ENCODE measurements at regions of chr15 and their contacts with region 1.

Region 1: GRCh38 chr15:70875001-70875782 is 17.0 kb downstream of the THAP10 start:
- DNase-seq: peak; percentile 49
- H3K4me3 ChIP-seq: no peak overlapping the region
- H3K27ac ChIP-seq: no peak overlapping the region
- H3K4me1 ChIP-seq: peaks cover 11% of the 10 kb centered on the region
- H3K27me3 ChIP-seq: no peaks in the 10 kb centered on the region
- CTCF ChIP-seq: peak; percentile 69

Region 2: DNA sequence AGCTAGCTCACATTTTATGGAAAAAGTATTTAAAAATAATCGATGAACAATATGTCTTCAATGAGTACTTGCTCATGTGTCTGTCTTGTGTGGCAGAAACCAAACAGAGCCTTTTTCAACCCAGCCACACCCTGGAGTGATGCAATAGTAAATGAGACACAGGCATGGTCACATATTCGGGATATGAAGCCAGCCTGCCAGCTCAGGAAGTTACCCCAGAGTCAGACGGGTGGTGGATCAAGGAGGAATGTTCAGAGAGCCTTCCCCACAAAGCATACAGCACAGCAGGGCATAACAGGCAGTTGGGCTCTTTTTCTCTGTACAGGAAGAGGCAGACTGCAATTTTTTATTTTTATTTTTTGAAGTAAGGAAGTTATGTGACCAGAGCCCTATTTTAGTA is 48.6 kb before region 1 on chr15:
- CTCF ChIA-PET with region 1: interaction called, 16 read pairs
- POLR2A ChIA-PET with region 1: no interaction called
- intact Hi-C with region 1: loop called (anchors 1 kb)
- DNase-seq: peak; percentile 88
- H3K4me3 ChIP-seq: no peak overlapping the region
- H3K27ac ChIP-seq: peak overlapping the region; percentile 82
- H3K4me1 ChIP-seq: peaks cover 21% of the 10 kb centered on the region
- H3K27me3 ChIP-seq: no peaks in the 10 kb centered on the region
- CTCF ChIP-seq: no peak

Region 3: GRCh38 chr15:70833897-70834765 is 41.1 kb before region 1 on chr15:
- CTCF ChIA-PET with region 1: interaction called, 12 read pairs
- POLR2A ChIA-PET with region 1: no interaction called
- intact Hi-C with region 1: no loop called
- DNase-seq: peak; percentile 84
- H3K4me3 ChIP-seq: no peak overlapping the region
- H3K27ac ChIP-seq: peak overlapping the region; percentile 81
- H3K4me1 ChIP-seq: peaks cover 31% of the 10 kb centered on the region
- H3K27me3 ChIP-seq: no peaks in the 10 kb centered on the region
- CTCF ChIP-seq: no peak

Region 4: DNA sequence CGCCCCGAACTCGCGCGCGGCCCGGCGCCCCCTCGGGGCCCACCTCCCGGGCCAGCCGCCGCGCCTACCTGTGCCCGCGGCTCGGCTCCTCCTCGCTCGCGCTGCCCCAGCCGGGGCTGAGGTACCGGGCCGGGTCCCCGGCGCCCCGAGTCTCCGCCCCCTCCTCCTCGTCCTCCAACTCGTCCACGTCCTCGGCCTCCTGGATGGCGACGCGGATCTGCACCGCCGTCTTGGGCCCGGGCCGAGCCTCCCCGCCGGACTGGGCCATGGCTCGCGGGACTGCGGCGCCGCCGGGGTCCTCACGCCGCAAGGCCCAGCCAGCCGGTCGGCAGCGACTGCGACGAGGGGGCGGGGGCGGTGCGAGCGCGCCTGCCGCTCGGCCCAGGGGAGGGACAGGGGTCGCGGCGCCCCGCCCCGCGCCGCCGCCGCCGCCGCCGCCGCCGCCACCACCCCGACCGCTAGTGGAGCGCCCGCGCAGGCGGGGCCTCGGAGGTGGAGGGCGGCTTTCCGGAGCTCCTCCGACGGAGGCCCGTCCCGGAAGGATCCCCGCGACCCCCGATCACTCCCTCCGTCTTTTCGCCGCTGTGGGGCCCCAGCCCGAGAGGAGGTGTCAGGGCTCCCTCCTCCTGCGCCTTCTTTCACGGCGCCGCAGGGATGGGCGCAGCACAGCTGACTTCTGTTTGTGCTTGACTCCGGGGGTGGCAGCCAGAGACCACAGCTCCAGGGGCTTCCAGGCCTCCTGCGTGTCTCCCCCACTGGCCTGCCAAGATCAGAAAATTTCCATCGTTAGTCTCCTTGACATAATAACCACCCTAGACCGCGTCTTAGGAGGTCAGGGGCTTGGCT is 21.1 kb before region 1 on chr15 and contains the start of gene LARP6:
- CTCF ChIA-PET with region 1: interaction called, 21 read pairs
- POLR2A ChIA-PET with region 1: no interaction called
- intact Hi-C with region 1: loop called (anchors 1 kb)
- DNase-seq: peak; percentile 71
- H3K4me3 ChIP-seq: peak within 1 kb of the TSS; percentile 86
- H3K27ac ChIP-seq: peak within 1 kb of the TSS; percentile 87
- H3K4me1 ChIP-seq: peaks cover 24% of the 10 kb centered on the region
- H3K27me3 ChIP-seq: no peaks in the 10 kb centered on the region
- CTCF ChIP-seq: no peak
- total RNA-seq, gene LARP6: 53.6 and 57.8 TPM in 2 replicates

Region 5: DNA sequence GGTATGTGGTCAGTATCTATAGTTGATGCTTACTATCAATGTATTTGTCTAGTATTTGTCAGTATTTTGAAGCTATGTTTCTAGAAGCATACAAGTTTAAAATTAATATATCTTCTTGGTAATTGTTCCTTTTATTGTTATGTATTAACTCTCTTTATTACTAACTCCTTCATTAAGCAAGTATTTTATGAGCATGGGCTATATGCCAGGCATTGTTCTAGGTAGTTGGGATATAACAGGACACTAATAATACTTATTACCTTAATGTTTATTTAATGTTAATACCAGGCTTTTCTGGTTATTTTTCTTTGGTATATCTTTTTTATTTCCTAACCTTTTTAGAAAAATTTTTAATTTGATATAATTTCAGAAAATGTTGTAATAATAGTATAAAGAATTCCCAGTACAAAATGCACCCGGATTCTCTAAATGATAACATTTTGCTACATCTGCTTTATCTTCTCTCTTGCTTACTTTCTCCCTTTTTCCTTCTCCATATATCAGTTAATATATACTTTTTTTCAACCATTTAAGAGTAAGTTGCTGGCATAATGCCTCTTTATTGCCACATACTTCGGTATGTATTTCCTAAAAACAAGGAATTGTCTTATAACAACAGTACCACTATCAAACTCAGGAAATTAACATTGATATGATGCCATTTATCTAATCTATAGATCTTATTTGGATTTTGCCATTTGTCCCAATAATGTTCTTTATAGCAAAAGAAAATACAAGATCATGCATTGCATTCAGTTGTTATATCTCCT is 48.3 kb after region 1 on chr15:
- CTCF ChIA-PET with region 1: no interaction called
- POLR2A ChIA-PET with region 1: no interaction called
- intact Hi-C with region 1: no loop called
- DNase-seq: no peak
- H3K4me3 ChIP-seq: no peak overlapping the region
- H3K27ac ChIP-seq: no peak overlapping the region
- H3K4me1 ChIP-seq: no peaks in the 10 kb centered on the region
- H3K27me3 ChIP-seq: no peaks in the 10 kb centered on the region
- CTCF ChIP-seq: no peak

Region 6: GRCh38 chr15:71397377-71397776 is 522.2 kb after region 1 on chr15:
- CTCF ChIA-PET with region 1: no interaction called
- POLR2A ChIA-PET with region 1: interaction called, 10 read pairs
- intact Hi-C with region 1: no loop called
- DNase-seq: no peak
- H3K4me3 ChIP-seq: no peak overlapping the region
- H3K27ac ChIP-seq: no peak overlapping the region
- H3K4me1 ChIP-seq: peaks cover under 1% of the 10 kb centered on the region
- H3K27me3 ChIP-seq: no peaks in the 10 kb centered on the region
- CTCF ChIP-seq: no peak